Caco-2 (cell line): ENCODE measurements at regions of chr4 and their contacts with region 1.

Region 1: DNA sequence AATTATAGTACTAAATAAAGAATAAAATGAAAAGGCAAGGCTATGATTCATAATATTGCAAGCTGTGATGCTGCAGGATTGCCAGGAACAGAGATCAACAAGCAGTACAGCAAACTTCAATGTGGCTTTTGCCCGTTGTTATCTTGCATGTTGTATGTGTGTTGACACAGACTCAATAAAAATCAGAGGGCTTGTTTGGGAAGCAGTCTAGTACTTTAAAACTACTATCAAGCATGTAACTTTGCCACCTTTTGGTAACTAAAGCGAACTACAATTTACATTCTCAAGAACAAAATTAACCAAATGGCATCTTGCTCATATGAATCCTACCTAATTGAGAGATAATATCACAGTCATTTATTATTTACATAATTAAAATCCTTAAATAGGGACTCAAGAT is 79.8 kb upstream of the GPM6A start:
- DNase-seq: peak in 1 of 2 experiments; percentile 41
- H3K4me3 ChIP-seq: no peak overlapping the region
- H3K4me3 Mint-ChIP-seq: no peak overlapping the region
- H3K27ac Mint-ChIP-seq: no peak overlapping the region
- H3K4me1 ChIP-seq: no peaks in the 10 kb centered on the region
- H3K4me1 Mint-ChIP-seq: peaks cover 7% of the 10 kb centered on the region
- H3K27me3 ChIP-seq: no peaks in the 10 kb centered on the region
- H3K27me3 Mint-ChIP-seq: peaks cover 11% of the 10 kb centered on the region
- CTCF ChIP-seq: peak; percentile 28 to 38

Region 2: GRCh38 chr4:175542786-175543185 is 349.1 kb before region 1 on chr4:
- CTCF ChIA-PET with region 1: no interaction called
- POLR2A ChIA-PET with region 1: no interaction called
- intact Hi-C with region 1: no loop called
- DNase-seq: no peak
- H3K4me3 ChIP-seq: no peak overlapping the region
- H3K4me3 Mint-ChIP-seq: no peak overlapping the region
- H3K27ac Mint-ChIP-seq: no peak overlapping the region
- H3K4me1 ChIP-seq: peaks cover 9% of the 10 kb centered on the region; the same call in 1 of the 2 replicates
- H3K4me1 Mint-ChIP-seq: peaks cover 7% of the 10 kb centered on the region
- H3K27me3 ChIP-seq: no peaks in the 10 kb centered on the region
- H3K27me3 Mint-ChIP-seq: peaks cover 5% of the 10 kb centered on the region
- CTCF ChIP-seq: no peak

Region 3: GRCh38 chr4:175657571-175657970 is 234.3 kb before region 1 on chr4:
- CTCF ChIA-PET with region 1: no interaction called
- POLR2A ChIA-PET with region 1: no interaction called
- intact Hi-C with region 1: loop called (anchors 1 kb)
- DNase-seq: no peak
- H3K4me3 ChIP-seq: no peak overlapping the region
- H3K4me3 Mint-ChIP-seq: no peak overlapping the region
- H3K27ac Mint-ChIP-seq: no peak overlapping the region
- H3K4me1 ChIP-seq: no peaks in the 10 kb centered on the region
- H3K4me1 Mint-ChIP-seq: no peaks in the 10 kb centered on the region
- H3K27me3 ChIP-seq: no peaks in the 10 kb centered on the region
- H3K27me3 Mint-ChIP-seq: no peaks in the 10 kb centered on the region
- CTCF ChIP-seq: no peak

Region 4: GRCh38 chr4:175691791-175692190 is 200.1 kb before region 1 on chr4:
- CTCF ChIA-PET with region 1: no interaction called
- POLR2A ChIA-PET with region 1: no interaction called
- intact Hi-C with region 1: loop called (anchors 10 kb)
- DNase-seq: no peak
- H3K4me3 ChIP-seq: no peak overlapping the region
- H3K4me3 Mint-ChIP-seq: no peak overlapping the region
- H3K27ac Mint-ChIP-seq: no peak overlapping the region
- H3K4me1 ChIP-seq: no peaks in the 10 kb centered on the region
- H3K4me1 Mint-ChIP-seq: no peaks in the 10 kb centered on the region
- H3K27me3 ChIP-seq: no peaks in the 10 kb centered on the region
- H3K27me3 Mint-ChIP-seq: peaks cover 3% of the 10 kb centered on the region
- CTCF ChIP-seq: no peak

Region 5: GRCh38 chr4:175841366-175841765 is 50.5 kb before region 1 on chr4:
- CTCF ChIA-PET with region 1: no interaction called
- POLR2A ChIA-PET with region 1: no interaction called
- intact Hi-C with region 1: no loop called
- DNase-seq: no peak
- H3K4me3 ChIP-seq: no peak overlapping the region
- H3K4me3 Mint-ChIP-seq: no peak overlapping the region
- H3K27ac Mint-ChIP-seq: no peak overlapping the region
- H3K4me1 ChIP-seq: no peaks in the 10 kb centered on the region
- H3K4me1 Mint-ChIP-seq: no peaks in the 10 kb centered on the region
- H3K27me3 ChIP-seq: no peaks in the 10 kb centered on the region
- H3K27me3 Mint-ChIP-seq: peaks cover 3% of the 10 kb centered on the region
- CTCF ChIP-seq: no peak

Region 6: GRCh38 chr4:176107695-176108094 is 215.8 kb after region 1 on chr4:
- CTCF ChIA-PET with region 1: no interaction called
- POLR2A ChIA-PET with region 1: no interaction called
- intact Hi-C with region 1: no loop called
- DNase-seq: no peak
- H3K4me3 ChIP-seq: no peak overlapping the region
- H3K4me3 Mint-ChIP-seq: no peak overlapping the region
- H3K27ac Mint-ChIP-seq: no peak overlapping the region
- H3K4me1 ChIP-seq: no peaks in the 10 kb centered on the region
- H3K4me1 Mint-ChIP-seq: no peaks in the 10 kb centered on the region
- H3K27me3 ChIP-seq: no peaks in the 10 kb centered on the region
- H3K27me3 Mint-ChIP-seq: peaks cover 3% of the 10 kb centered on the region
- CTCF ChIP-seq: no peak